HepG2 (cell line): ENCODE measurements at regions of chr20 and their contacts with region 1.

Region 1: GRCh38 chr20:57234556-57235251 is 31.7 kb downstream of the BMP7 start:
- DNase-seq: no peak
- ATAC-seq: no peak
- H3K4me3 ChIP-seq: no peak overlapping the region
- H3K27ac ChIP-seq: no peak overlapping the region
- H3K4me1 ChIP-seq: no peaks in the 10 kb centered on the region
- H3K27me3 ChIP-seq: peaks cover 0 to 44% of the 10 kb centered on the region in 2 experiments; a peak in 3 of 5 replicates
- CTCF ChIP-seq: no peak
- EP300 ChIP-seq: no peak
- POLR2A ChIP-seq: no peak
- RAD21 ChIP-seq: no peak

Region 2: GRCh38 chr20:57270204-57270937 is 35.7 kb after region 1 on chr20:
- CTCF ChIA-PET with region 1: no interaction called
- POLR2A ChIA-PET with region 1: no interaction called
- in situ Hi-C with region 1: no loop called
- intact Hi-C with region 1: loop called (anchors 2 kb)
- DNase-seq: no peak
- ATAC-seq: peak; percentile 9; the same call in 1 of the 3 replicates
- H3K4me3 ChIP-seq: no peak overlapping the region
- H3K27ac ChIP-seq: no peak overlapping the region
- H3K4me1 ChIP-seq: no peaks in the 10 kb centered on the region
- H3K27me3 ChIP-seq: peaks cover 32 to 82% of the 10 kb centered on the region in 2 experiments
- CTCF ChIP-seq: peak; percentile 14; the same call in 1 of the 2 replicates
- EP300 ChIP-seq: no peak
- POLR2A ChIP-seq: no peak
- RAD21 ChIP-seq: no peak